K562 (cell line): ENCODE measurements at regions of chr7 and their contacts with region 1.

Region 1: DNA sequence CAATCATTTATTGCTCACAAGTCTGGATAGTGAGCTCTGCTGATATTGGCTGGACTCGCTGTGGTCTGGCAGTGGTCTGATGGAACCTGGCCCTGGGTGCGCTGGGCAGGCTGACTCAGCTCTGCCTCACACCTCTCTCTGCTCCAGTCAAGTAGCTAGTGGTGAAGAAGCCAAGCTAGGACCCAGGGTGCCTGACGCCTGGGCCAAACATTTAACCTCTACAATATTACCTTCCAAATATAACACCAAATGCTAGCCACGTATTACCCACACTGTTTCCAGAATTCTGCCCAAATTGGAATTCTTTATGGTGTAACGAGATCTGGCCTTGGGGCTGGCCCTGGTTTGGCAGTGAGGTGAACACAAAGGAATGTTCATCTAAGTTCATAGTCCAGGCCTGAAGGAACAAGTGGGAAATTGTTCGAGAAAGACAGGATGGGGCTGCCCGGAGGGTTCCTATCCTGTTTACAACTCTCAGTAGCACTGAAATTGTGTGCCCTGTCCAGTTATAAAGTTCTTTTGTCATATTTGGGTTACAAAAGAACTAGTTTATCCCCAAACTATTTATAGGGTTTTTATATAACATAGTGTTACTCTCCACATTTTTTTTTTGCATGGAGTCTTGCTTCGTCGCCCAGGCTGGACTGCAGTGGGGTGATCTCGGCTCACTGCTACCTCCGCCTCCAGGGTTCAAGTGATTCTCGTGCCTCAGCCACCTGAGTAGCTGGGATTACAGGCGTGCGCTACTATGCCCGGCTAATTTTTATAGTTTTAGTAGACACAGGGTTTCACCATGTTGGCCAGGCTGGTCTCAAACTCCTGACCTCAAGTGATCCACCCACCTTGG is 16.3 kb downstream of the OR2AE1 start:
- DNase-seq: no peak
- ATAC-seq: peak; percentile 61
- H3K4me3 ChIP-seq: no peak overlapping the region
- H3K27ac ChIP-seq: no peak overlapping the region
- H3K4me1 ChIP-seq: no peaks in the 10 kb centered on the region
- H3K27me3 ChIP-seq: no peaks in the 10 kb centered on the region; a peak in 1 of 5 replicates
- CTCF ChIP-seq: no peak
- EP300 ChIP-seq: no peak
- POLR2A ChIP-seq: no peak
- RAD21 ChIP-seq: no peak

Region 2: GRCh38 chr7:99579956-99580777 is 280.3 kb before region 1 on chr7:
- CTCF ChIA-PET with region 1: no interaction called
- POLR2A ChIA-PET with region 1: no interaction called
- in situ Hi-C with region 1: no loop called
- intact Hi-C with region 1: no loop called
- DNase-seq: peak in 1 of 4 experiments; percentile 36
- ATAC-seq: no peak; the same call in 2 of the 3 replicates
- H3K4me3 ChIP-seq: no peak overlapping the region
- H3K27ac ChIP-seq: no peak overlapping the region
- H3K4me1 ChIP-seq: peaks cover 0 to 17% of the 10 kb centered on the region in 2 experiments; a peak in 2 of 5 replicates
- H3K27me3 ChIP-seq: peaks cover 15 to 17% of the 10 kb centered on the region in 2 experiments; a peak in 3 of 5 replicates
- CTCF ChIP-seq: no peak
- EP300 ChIP-seq: no peak
- POLR2A ChIP-seq: no peak
- RAD21 ChIP-seq: no peak

Region 3: GRCh38 chr7:99848420-99849216 is 11.9 kb before region 1 on chr7:
- CTCF ChIA-PET with region 1: no interaction called
- POLR2A ChIA-PET with region 1: interaction called, 10 read pairs
- in situ Hi-C with region 1: no loop called
- intact Hi-C with region 1: no loop called
- DNase-seq: peak; percentile 37 to 54 (median 47)
- ATAC-seq: peak; percentile 90
- H3K4me3 ChIP-seq: no peak overlapping the region
- H3K27ac ChIP-seq: no peak overlapping the region
- H3K4me1 ChIP-seq: peaks cover 0 to 14% of the 10 kb centered on the region in 2 experiments; a peak in 2 of 5 replicates
- H3K27me3 ChIP-seq: no peaks in the 10 kb centered on the region; a peak in 1 of 5 replicates
- CTCF ChIP-seq: no peak
- EP300 ChIP-seq: no peak
- POLR2A ChIP-seq: no peak
- RAD21 ChIP-seq: no peak